ENCODE measurements at regions of chr11 and their contacts with region 1.

Region 1: DNA sequence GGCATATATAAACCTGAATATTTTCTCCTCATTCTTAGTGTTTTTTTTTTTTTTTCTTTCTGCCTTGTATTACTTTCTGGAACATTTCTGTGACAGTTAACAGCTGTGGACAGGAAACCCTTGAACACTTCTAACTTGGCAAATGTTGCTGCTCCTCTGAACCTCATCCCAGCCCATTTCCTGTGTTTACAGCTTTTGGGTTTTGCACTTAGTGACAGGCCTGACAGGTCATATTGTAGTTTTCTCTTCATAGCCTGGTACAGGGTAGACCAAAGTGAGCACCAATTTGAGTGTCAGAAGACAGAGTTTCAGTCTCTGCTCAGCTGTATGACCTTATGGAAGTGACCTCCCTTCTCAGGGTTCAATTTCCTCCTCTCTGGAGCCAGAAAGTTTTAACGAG is 91.6 kb downstream of the STIM1 start:
- DNase-seq: peak; percentile 72
- H3K4me3 Mint-ChIP-seq: peak overlapping the region; percentile 65
- H3K27ac Mint-ChIP-seq: peak overlapping the region; percentile 97
- H3K4me1 Mint-ChIP-seq: peaks cover 95% of the 10 kb centered on the region
- H3K27me3 Mint-ChIP-seq: no peaks in the 10 kb centered on the region

Region 2: GRCh38 chr11:3849297-3849874 is 97.7 kb before region 1 on chr11:
- CTCF ChIA-PET with region 1: interaction called, 25 read pairs
- POLR2A ChIA-PET with region 1: interaction called, 129 read pairs
- DNase-seq: peak; percentile 48
- H3K4me3 Mint-ChIP-seq: no peak overlapping the region
- H3K27ac Mint-ChIP-seq: no peak overlapping the region
- H3K4me1 Mint-ChIP-seq: peaks cover 33% of the 10 kb centered on the region
- H3K27me3 Mint-ChIP-seq: peaks cover 3% of the 10 kb centered on the region

Region 3: GRCh38 chr11:3959015-3959919 is 12.2 kb after region 1 on chr11:
- CTCF ChIA-PET with region 1: interaction called, 9 read pairs
- POLR2A ChIA-PET with region 1: interaction called, 16 read pairs
- DNase-seq: no peak
- H3K4me3 Mint-ChIP-seq: no peak overlapping the region
- H3K27ac Mint-ChIP-seq: no peak overlapping the region
- H3K4me1 Mint-ChIP-seq: peaks cover 63% of the 10 kb centered on the region
- H3K27me3 Mint-ChIP-seq: no peaks in the 10 kb centered on the region

Region 4: GRCh38 chr11:3969613-3970012 is 22.6 kb after region 1 on chr11:
- CTCF ChIA-PET with region 1: interaction called, 5 read pairs
- POLR2A ChIA-PET with region 1: interaction called, 13 read pairs
- DNase-seq: peak; percentile 38
- H3K4me3 Mint-ChIP-seq: no peak overlapping the region
- H3K27ac Mint-ChIP-seq: peak overlapping the region; percentile 49
- H3K4me1 Mint-ChIP-seq: peaks cover 41% of the 10 kb centered on the region
- H3K27me3 Mint-ChIP-seq: no peaks in the 10 kb centered on the region